ENCODE measurements at regions of chr1 and their contacts with region 1.

Region 1: GRCh38 chr1:11272832-11273594 is at the start of gene UBIAD1:
- DNase-seq: peak; percentile 77
- ATAC-seq: peak; percentile 91
- H3K4me3 Mint-ChIP-seq: peak within 1 kb of the TSS; percentile 92
- H3K27ac Mint-ChIP-seq: peak within 1 kb of the TSS; percentile 98
- H3K4me1 Mint-ChIP-seq: peaks cover 14% of the 10 kb centered on the region
- H3K27me3 Mint-ChIP-seq: no peaks in the 10 kb centered on the region; the same call in 1 of the 2 replicates
- CTCF ChIP-seq: no peak
- total RNA-seq, gene UBIAD1: 20.8 to 21.6 TPM (median 20.8 TPM) in 3 replicates

Region 2: GRCh38 chr1:11262171-11263049 is 10.6 kb before region 1 on chr1 and contains the start of gene MTOR:
- CTCF ChIA-PET with region 1: interaction called, 26 read pairs
- POLR2A ChIA-PET with region 1: interaction called, 9 read pairs
- DNase-seq: peak; percentile 97
- ATAC-seq: peak; percentile 98
- H3K4me3 Mint-ChIP-seq: peak within 1 kb of the TSS; percentile 97
- H3K27ac Mint-ChIP-seq: peak within 1 kb of the TSS; percentile 98
- H3K4me1 Mint-ChIP-seq: peaks cover 9% of the 10 kb centered on the region
- H3K27me3 Mint-ChIP-seq: no peaks in the 10 kb centered on the region
- CTCF ChIP-seq: no peak
- total RNA-seq, gene MTOR: 63.1 to 66.7 TPM (median 65.0 TPM) in 3 replicates

Region 3: GRCh38 chr1:11285883-11286734 is 13.1 kb after region 1 on chr1:
- CTCF ChIA-PET with region 1: interaction called, 12 read pairs
- POLR2A ChIA-PET with region 1: no interaction called
- DNase-seq: no peak
- ATAC-seq: no peak
- H3K4me3 Mint-ChIP-seq: peak overlapping the region; percentile 45
- H3K27ac Mint-ChIP-seq: peak overlapping the region; percentile 99
- H3K4me1 Mint-ChIP-seq: peaks cover 54% of the 10 kb centered on the region
- H3K27me3 Mint-ChIP-seq: no peaks in the 10 kb centered on the region
- CTCF ChIP-seq: no peak